ENCODE measurements at regions of chr12 and their contacts with region 1.

Region 1: DNA sequence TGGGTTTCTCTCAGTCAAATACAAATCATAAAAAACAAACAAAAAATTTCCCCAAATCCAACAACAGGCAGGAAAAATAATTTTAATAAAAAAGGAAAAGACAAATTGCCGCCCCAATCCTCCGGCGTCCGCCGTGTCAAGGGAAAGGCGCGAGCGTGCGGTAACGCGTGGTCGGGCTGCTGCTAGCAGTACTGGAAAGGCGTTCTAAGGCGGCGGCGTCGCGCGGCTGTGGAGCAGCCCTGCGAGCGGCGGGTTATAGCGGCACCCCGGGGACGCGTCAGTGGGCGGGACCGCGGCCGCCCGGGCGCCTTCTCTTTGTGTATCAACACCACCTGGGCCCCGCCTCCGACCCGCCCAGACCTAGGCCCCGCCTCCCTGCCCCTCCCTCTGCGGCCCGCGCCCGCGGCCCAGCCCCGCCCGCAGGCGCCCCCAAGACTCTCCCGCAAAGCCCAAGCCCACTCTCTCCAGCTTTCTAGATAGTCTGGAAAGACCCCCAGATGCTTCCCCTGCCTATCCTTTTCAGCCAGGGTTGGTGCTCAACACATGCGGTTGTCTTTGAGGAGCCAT is at the start of gene SLC38A2:
- DNase-seq: peak; percentile 97
- H3K4me3 Mint-ChIP-seq: peak within 1 kb of the TSS; percentile 91
- H3K27ac Mint-ChIP-seq: peak within 1 kb of the TSS; percentile 99
- H3K4me1 Mint-ChIP-seq: peaks cover 64% of the 10 kb centered on the region
- H3K27me3 Mint-ChIP-seq: no peaks in the 10 kb centered on the region
- total RNA-seq, gene SLC38A2: 265 to 267 TPM

Region 2: DNA sequence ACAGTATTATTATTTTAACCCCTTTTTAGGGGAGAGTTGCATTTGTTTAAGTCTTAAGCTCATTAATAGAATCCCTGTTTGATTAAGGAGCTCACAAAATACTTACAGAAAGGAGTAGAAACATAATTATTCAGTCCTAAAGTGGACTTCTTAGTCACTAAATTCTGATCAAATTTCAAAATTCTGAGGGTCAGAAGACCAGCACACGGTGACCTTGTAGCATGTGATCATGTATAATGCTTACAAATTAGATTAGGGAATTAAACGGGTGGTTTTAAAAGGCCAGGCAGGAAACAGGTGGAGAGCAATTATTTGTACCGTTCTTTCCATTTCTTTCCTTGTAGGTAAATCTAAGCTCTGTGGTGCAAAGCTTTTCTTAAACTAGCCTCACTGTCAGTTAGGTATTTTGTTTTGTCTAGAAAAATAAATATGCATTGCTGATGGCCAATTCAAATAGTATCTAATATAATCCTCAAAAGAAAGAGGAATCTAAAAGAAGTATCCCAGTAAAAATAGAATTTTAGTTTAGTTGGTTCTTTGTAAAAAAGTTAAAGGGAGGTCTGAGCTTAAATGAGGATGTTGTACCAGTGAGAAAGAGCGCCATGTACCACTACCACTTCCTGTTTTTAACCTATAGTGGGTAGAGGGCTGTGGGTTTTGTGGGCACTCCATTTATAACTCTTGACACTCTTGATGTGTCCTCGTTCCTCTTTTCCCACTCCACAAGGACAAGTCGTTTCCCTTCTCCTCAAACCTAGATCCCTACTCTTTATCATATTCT is 154.9 kb before region 1 on chr12:
- CTCF ChIA-PET with region 1: no interaction called
- POLR2A ChIA-PET with region 1: interaction called, 63 read pairs
- DNase-seq: peak; percentile 81
- H3K4me3 Mint-ChIP-seq: peak overlapping the region; percentile 73
- H3K27ac Mint-ChIP-seq: peak overlapping the region; percentile 95
- H3K4me1 Mint-ChIP-seq: peaks cover 94% of the 10 kb centered on the region
- H3K27me3 Mint-ChIP-seq: no peaks in the 10 kb centered on the region

Region 3: GRCh38 chr12:46303039-46303666 is 69.5 kb before region 1 on chr12:
- CTCF ChIA-PET with region 1: no interaction called
- POLR2A ChIA-PET with region 1: no interaction called
- DNase-seq: peak; percentile 39
- H3K4me3 Mint-ChIP-seq: no peak overlapping the region
- H3K27ac Mint-ChIP-seq: no peak overlapping the region
- H3K4me1 Mint-ChIP-seq: peaks cover 1% of the 10 kb centered on the region
- H3K27me3 Mint-ChIP-seq: peaks cover 11% of the 10 kb centered on the region

Region 4: GRCh38 chr12:46382964-46383653 is 10.5 kb after region 1 on chr12:
- CTCF ChIA-PET with region 1: interaction called, 5 read pairs
- POLR2A ChIA-PET with region 1: interaction called, 34 read pairs
- DNase-seq: peak; percentile 95
- H3K4me3 Mint-ChIP-seq: peak overlapping the region; percentile 82
- H3K27ac Mint-ChIP-seq: peak overlapping the region; percentile 90
- H3K4me1 Mint-ChIP-seq: peaks cover 38% of the 10 kb centered on the region
- H3K27me3 Mint-ChIP-seq: no peaks in the 10 kb centered on the region

Region 5: DNA sequence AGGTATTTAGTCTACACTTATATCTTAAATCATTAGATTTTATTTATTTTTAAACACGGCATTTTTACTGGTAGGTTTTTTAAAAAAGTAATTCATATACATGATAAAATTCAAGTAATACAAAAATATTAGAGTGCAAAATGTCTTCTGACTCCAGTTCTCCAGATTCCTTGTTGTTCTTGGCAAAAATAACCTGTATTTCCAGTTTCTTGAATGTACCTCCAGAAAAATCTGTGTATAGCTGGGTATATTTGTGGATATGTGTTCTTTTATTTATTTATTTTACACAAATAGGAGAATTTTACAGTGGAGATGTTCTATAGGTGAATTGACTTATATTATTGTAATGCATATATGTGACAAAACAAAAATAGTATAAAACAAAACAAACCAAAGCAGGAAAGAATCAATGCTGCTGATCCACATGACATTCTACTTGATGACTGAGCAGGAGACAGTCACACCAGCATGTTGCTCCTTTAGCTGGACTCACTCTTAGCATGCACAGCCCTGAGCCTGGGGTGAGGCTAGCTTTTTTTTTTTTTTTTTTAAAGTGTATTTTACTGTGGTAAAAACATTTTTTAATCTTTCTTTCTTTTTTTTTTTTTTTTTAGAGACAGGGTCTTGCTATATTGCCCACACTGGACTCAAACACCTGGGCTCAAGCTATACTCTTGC is 42.1 kb after region 1 on chr12:
- CTCF ChIA-PET with region 1: no interaction called
- POLR2A ChIA-PET with region 1: no interaction called
- DNase-seq: no peak
- H3K4me3 Mint-ChIP-seq: no peak overlapping the region
- H3K27ac Mint-ChIP-seq: no peak overlapping the region
- H3K4me1 Mint-ChIP-seq: no peaks in the 10 kb centered on the region
- H3K27me3 Mint-ChIP-seq: peaks cover 13% of the 10 kb centered on the region

Region 6: DNA sequence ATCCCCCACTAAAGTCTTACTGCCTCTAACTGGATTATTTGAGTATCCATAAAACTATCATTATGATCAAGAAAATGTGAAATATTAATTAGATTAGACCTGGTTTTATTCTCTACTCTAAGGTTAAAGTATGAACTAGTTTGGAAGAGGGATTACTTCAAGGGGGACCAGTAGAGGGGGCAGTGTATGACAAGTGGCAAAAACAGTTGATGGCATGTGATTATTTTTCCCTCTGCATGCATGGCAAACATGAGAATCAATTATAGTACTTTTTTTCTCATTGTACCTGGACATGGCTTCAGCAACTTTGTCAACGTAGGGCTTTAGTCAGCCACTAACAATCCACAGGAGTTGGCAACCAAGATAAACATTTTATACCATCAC is 144.9 kb after region 1 on chr12:
- CTCF ChIA-PET with region 1: interaction called, 3 read pairs
- POLR2A ChIA-PET with region 1: interaction called, 46 read pairs
- DNase-seq: no peak
- H3K4me3 Mint-ChIP-seq: peak overlapping the region; percentile 22
- H3K27ac Mint-ChIP-seq: peak overlapping the region; percentile 85
- H3K4me1 Mint-ChIP-seq: peaks cover 51% of the 10 kb centered on the region
- H3K27me3 Mint-ChIP-seq: no peaks in the 10 kb centered on the region

Region 7: DNA sequence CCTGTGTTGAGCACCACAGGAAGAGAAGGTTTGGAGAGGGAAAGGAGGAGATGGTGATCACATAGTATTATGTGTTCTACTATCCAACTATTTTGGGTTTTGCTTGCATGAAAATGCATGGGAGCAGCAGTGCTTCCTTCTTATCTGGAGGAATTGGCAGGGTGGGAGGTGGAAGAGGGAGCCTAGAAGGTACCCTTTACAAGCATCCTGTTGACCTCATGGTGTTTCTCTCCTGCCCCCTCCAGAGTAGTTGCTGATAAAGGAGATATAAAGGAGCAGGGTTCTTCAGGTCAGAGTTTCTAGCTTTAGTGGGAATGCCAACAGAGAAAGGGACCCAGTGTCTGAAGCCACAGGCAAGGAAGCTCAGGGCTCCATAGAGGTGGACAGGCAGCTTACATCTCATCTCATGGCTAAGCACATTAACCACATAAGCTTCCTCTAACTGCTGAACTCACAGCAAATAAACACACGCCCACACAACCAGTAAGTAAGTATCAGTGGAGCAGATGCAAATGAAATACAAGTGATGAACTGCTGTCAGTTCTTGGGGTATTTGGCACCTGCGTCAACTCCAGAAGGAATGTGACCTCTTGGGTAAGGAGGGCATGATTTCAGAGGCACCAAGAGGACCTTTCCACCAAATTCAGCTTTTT is 174.1 kb after region 1 on chr12:
- CTCF ChIA-PET with region 1: no interaction called
- POLR2A ChIA-PET with region 1: interaction called, 27 read pairs
- DNase-seq: peak; percentile 29
- H3K4me3 Mint-ChIP-seq: no peak overlapping the region
- H3K27ac Mint-ChIP-seq: peak overlapping the region; percentile 81
- H3K4me1 Mint-ChIP-seq: peaks cover 59% of the 10 kb centered on the region
- H3K27me3 Mint-ChIP-seq: no peaks in the 10 kb centered on the region